Activated CD4-positive, alpha-beta memory T cell treated with anti-CD3 and anti-CD28 coated beads, Interleukin-2, amount 10 ng/mL, durations not matched to agents 7 days and 5 days (primary cell): ENCODE measurements at regions of chr3 and their contacts with region 1.

Region 1: GRCh38 chr3:69306239-69307185 is 79.4 kb downstream of the FRMD4B start:
- DNase-seq: peak; percentile 80
- H3K4me3 Mint-ChIP-seq: no peak overlapping the region
- H3K27ac Mint-ChIP-seq: no peak overlapping the region
- H3K4me1 Mint-ChIP-seq: peaks cover 22% of the 10 kb centered on the region
- H3K27me3 Mint-ChIP-seq: peaks cover 4% of the 10 kb centered on the region

Region 2: DNA sequence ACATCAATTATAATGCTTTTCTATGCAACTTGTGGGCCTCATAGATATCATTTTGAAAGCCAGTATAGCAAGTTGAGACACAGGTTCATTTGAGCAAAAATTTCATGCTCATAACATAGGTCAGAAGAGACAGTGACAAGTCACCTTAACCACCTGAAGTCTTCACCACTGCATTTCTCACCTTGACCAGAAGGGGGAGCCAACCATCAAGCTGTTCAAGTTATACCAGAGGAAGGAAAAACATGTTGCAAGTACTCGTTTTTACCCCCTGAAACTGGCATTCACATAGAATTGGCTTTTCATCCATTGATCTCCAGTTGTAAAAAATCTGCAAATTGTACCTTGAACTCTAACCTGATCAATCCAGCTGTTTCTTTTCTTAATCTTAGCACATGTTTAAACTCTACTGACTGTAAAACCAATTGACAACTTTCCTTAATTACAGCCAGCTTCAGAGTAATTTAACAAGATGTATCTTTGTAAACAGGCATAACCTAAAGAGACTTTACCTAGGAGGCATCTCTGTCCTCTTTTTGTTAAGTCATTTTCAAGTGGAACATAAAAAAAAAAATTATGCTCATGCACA is 185.5 kb before region 1 on chr3:
- CTCF ChIA-PET with region 1: interaction called, 58 read pairs
- POLR2A ChIA-PET with region 1: interaction called, 3 read pairs
- DNase-seq: peak; percentile 83
- H3K4me3 Mint-ChIP-seq: no peak overlapping the region
- H3K27ac Mint-ChIP-seq: no peak overlapping the region
- H3K4me1 Mint-ChIP-seq: peaks cover 5% of the 10 kb centered on the region
- H3K27me3 Mint-ChIP-seq: no peaks in the 10 kb centered on the region

Region 3: GRCh38 chr3:69174871-69175737 is 131.4 kb before region 1 on chr3:
- CTCF ChIA-PET with region 1: interaction called, 28 read pairs
- POLR2A ChIA-PET with region 1: interaction called, 4 read pairs
- DNase-seq: no peak
- H3K4me3 Mint-ChIP-seq: no peak overlapping the region
- H3K27ac Mint-ChIP-seq: no peak overlapping the region
- H3K4me1 Mint-ChIP-seq: peaks cover 36% of the 10 kb centered on the region
- H3K27me3 Mint-ChIP-seq: no peaks in the 10 kb centered on the region

Region 4: DNA sequence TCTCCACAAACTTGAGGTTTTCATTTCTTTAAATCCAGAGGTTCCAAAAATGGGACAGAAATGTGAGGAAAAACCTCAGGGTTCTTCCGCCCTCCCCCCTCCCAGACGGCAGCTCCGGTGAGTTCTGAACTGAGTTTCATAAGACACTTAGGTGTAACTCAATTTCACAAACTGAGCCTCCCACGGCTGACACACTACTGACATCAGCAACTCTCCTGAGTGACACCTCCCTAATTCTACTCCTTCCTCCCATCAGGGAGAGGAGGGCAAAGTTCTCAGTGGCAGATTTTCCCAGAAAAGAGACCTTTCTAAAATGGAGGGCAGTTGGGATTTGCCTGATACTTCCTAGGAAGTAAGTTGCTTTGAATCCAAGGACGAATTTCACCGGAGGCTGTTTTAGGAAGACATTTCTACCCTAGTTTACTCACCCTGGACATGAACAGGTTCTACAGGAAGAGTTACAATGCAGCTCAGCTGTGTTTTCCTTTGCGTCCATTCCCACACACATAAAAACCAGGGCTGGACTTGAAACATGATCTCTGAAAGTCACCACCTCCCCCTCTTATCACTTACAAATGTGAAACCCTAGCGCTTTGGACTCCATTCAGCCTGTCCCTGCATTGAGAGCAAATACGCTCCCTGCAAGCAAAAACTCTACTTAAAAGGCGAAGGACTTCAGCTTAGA is 106.0 kb before region 1 on chr3:
- CTCF ChIA-PET with region 1: interaction called, 30 read pairs
- POLR2A ChIA-PET with region 1: interaction called, 11 read pairs
- DNase-seq: peak; percentile 68
- H3K4me3 Mint-ChIP-seq: peak overlapping the region; percentile 85
- H3K27ac Mint-ChIP-seq: peak overlapping the region; percentile 97
- H3K4me1 Mint-ChIP-seq: peaks cover 69% of the 10 kb centered on the region
- H3K27me3 Mint-ChIP-seq: no peaks in the 10 kb centered on the region

Region 5: DNA sequence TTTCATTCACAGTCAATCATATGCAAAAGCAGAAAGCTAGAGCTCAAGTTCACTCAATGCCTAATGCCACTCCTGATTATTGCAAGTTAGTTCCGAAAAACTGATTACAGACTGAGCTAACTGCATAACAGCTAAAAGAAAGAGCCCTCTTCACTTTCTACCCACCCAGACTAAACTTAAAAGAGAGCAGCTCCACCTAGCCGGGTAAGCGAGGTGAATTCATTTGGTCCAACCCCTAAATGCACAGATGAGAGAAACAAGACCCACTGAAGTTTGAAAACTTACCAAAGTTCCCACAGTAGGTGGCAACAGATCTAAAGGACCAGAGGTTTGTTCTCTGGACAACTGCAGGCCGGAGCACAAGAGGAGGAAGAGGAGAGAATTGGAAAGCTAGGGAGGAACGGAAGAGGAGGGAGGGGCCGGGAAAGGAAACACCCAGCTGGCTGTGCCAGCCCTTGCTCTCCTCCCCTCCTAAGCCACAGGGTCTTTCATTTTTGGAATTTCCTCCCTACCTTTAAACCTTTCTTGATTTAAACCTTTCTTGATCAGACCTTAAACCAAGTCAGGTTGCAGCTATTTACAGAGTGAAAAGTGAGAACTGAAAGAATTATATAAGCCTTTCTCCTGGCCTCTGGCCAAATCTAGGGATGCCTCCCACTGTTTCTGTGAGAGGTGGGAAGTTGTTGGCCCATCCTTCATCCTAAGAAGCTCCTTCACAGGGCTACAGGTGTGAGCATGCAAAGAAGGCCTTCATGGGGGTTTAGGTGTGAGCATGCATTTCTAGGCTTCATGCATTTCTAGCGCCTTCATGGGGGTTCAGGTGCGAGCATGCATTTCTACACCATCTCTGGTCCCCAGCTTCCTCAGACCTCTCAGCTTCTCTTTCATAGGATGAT is 69.5 kb before region 1 on chr3:
- CTCF ChIA-PET with region 1: interaction called, 10 read pairs
- POLR2A ChIA-PET with region 1: no interaction called
- DNase-seq: no peak
- H3K4me3 Mint-ChIP-seq: peak overlapping the region; percentile 70
- H3K27ac Mint-ChIP-seq: peak overlapping the region; percentile 48
- H3K4me1 Mint-ChIP-seq: peaks cover 30% of the 10 kb centered on the region
- H3K27me3 Mint-ChIP-seq: no peaks in the 10 kb centered on the region